Mammary epithelial cell (primary cell): ENCODE measurements at regions of chr5 and their contacts with region 1.

Region 1: DNA sequence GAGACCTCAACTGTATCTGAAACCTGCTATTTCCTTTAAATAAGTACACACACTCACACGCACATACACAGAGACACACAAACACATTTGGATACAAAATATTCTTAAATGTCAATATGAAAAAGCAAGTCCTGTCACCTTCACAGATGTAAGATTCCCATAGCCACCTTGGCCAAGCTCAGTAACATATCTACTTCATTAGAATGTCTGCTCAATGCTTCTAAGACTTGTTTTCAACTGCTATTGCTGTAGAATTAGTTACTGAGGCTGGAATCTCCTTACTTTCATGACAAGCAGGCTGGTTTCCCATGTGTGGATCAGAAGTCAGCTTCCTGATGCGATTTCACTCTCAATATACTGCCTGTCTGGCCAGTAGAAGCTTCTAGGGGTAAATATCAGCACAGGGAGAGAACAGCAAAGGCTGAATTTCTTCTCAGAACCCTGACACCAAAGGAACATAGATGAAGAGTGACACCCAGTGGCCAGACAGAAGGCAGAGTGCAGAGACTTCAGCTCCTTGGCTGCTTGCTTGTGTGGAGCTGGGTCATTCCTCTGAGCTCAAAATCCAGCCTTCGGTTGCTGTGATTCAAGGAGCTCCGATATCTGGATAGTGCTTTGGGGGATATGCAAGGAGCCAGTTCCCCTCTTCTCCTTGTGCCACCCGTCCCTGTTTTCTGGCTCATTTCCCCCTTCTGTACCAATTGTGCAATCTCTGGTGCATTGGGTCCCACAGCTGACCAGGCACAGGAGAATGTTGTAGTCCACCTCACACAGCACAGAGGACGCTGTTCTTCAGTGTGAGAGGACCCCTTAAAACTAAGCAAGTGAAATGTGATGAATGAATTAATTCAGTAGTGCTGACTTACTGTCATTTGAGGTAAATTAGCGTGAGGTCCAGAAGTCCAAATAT is 26.6 kb upstream of the ABLIM3 start:
- DNase-seq: peak; percentile 77
- H3K4me3 ChIP-seq: no peak overlapping the region
- H3K27ac ChIP-seq: peak overlapping the region; percentile 65
- H3K4me1 ChIP-seq: peaks cover 24% of the 10 kb centered on the region
- H3K27me3 ChIP-seq: no peaks in the 10 kb centered on the region
- CTCF ChIP-seq: peak; percentile 88 to 95

Region 2: DNA sequence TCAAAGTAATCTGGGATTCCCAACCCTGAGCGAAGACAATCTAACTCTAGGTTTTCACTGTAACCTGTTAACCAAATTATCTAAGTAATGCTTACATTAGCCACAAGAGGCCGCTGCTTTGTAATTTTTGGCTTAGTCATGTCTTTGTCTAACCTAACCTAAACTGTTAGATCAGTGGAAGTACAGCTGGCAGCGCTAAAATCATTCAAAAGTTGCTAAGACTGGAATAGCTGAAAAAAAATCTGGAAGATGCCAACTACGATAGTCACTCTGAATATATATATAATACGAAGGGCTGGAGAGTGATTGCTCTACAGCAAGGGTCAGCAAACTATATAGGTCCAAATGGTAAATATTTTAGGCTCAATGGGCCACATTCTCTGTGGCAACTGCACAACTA is 670.7 kb before region 1 on chr5:
- CTCF ChIA-PET with region 1: no interaction called
- dilution Hi-C with region 1: no loop called
- in situ Hi-C with region 1: no loop called
- intact Hi-C with region 1: loop called (anchors 10 kb)
- DNase-seq: peak; percentile 46
- H3K4me3 ChIP-seq: no peak overlapping the region
- H3K27ac ChIP-seq: no peak overlapping the region
- H3K4me1 ChIP-seq: no peaks in the 10 kb centered on the region
- H3K27me3 ChIP-seq: no peaks in the 10 kb centered on the region
- CTCF ChIP-seq: peak; percentile 67 to 68

Region 3: DNA sequence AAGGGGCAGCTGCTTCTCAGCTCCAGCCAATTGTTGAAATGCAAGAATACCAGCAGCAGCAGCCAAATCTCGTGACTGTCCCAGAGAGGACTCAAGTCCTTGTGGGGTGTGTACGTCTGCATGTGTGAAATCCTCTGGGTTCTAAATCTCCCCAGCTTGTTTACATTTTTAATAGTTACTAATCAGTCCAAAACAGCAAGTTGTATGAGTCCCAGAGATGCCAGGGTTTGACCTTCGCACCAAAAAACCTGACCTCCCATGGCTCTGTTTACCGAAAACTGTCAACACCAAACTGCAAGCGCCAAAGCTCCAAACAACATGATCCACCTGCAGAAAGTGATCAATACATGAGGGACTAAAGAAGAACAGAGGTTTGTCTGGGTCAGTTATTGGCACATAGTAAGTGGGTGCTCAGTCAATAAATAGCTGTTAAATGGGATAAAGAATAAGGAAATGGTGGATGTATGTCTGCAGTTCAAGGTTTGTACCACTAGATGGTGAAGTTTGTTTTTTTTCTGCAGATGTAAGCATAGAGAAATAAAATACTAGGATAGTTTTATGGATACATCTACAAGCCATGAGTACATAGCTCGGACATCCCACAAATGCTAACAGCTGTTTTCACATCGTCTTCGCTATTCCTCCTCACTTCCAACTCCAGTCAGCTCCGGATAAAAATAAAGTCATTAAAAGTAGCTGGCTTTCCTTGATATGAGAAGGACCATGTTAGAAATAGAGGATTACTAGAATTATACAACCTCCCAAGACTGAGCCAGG is 373.5 kb before region 1 on chr5:
- CTCF ChIA-PET with region 1: interaction called, 11 read pairs
- dilution Hi-C with region 1: loop called (anchors 5 kb)
- in situ Hi-C with region 1: loop called (anchors 5 to 10 kb)
- intact Hi-C with region 1: loop called (anchors 1 kb)
- DNase-seq: peak; percentile 58
- H3K4me3 ChIP-seq: no peak overlapping the region
- H3K27ac ChIP-seq: no peak overlapping the region
- H3K4me1 ChIP-seq: no peaks in the 10 kb centered on the region
- H3K27me3 ChIP-seq: no peaks in the 10 kb centered on the region
- CTCF ChIP-seq: peak; percentile 66 to 77

Region 4: DNA sequence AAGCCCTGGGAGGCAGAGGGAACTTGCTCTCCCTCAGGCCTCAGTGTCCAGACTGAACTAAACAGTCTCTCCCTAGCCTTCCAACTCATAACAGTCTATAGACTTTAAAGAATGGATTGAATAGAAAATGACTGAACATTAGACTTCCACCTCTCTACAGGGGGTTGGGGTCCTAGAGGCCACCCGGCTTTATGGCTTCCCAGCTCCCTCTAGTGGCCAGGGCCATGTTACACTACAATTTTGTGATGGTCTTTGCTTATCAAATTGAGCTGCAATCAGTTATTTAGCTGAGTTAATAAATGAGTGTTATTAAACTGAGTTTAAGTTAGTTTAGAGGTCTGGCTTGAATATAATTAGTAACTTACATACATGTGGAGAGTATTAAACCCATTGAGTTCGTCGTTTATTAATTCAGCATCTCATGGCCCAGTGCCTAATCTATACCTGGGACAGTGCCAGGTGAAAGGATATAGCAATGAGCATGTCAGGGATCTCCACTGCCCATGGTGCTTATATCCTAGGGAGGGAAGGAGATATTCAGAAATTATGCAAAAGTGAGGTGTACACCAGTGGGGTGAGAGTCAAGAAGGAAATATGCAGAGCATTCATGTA is 157.0 kb before region 1 on chr5:
- CTCF ChIA-PET with region 1: interaction called, 4 read pairs
- dilution Hi-C with region 1: no loop called
- in situ Hi-C with region 1: no loop called
- intact Hi-C with region 1: loop called (anchors 1 kb)
- DNase-seq: peak; percentile 33
- H3K4me3 ChIP-seq: no peak overlapping the region
- H3K27ac ChIP-seq: peak overlapping the region; percentile 73
- H3K4me1 ChIP-seq: peaks cover 18% of the 10 kb centered on the region
- H3K27me3 ChIP-seq: no peaks in the 10 kb centered on the region
- CTCF ChIP-seq: peak; percentile 90

Region 5: DNA sequence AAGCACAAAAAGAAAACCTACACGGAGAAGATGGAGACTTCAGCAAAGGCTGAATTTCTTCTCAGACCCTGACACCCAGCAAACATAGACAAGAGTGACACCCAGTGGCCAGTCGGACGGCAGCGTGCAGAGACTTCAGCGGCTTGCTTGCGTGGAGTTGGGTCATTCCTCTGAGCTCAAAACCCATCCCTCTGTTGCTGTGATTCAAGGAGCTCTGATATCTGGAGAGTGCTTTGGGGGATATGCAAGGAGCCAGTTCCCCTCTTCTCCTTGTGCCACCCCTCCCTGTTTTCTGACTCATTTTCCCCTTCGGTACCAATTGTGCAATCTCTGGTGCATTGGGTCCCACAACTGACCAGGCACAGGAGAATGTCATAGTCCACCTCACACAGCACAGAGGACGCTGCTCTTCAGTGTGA is 79.3 kb before region 1 on chr5:
- CTCF ChIA-PET with region 1: interaction called, 14 read pairs
- dilution Hi-C with region 1: no loop called
- in situ Hi-C with region 1: loop called in 1 of 2 experiments (anchors 5 kb)
- intact Hi-C with region 1: loop called (anchors 1 kb)
- DNase-seq: peak; percentile 61
- H3K4me3 ChIP-seq: no peak overlapping the region
- H3K27ac ChIP-seq: no peak overlapping the region
- H3K4me1 ChIP-seq: peaks cover 25% of the 10 kb centered on the region
- H3K27me3 ChIP-seq: no peaks in the 10 kb centered on the region
- CTCF ChIP-seq: peak; percentile 88 to 90

Region 6: DNA sequence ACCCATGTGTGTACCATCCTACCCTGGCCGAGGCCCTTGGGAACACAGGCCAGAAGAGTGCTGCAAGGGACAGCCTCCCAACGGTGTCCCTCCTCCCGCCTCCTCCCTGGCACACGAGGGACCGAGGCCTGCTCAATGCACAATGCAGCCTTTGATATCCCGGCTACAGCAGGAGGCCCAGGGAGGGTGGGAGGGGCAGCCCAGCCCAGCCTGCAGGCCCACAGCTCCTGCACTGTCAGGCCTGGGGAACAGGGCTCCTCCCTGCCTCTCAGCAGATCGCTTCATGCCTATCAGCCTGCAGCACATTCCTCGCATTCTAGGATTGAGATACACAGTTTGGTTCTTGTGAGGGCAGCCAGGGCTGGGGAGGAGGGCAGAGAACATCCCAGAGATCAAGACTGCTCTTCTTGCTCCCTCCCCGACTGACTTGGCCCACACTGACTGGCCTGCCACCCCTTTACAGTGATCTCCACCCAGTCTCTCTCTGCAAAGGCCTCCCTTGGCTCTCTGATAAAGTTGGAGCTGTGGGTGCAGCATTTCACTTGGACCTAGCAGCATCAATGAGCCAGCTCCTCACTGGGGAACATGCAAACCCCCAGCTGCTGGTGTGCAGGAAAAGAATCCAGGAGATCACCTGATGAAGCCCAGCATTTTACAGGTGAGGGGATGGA is 51.5 kb before region 1 on chr5 and contains the start of gene SH3TC2:
- CTCF ChIA-PET with region 1: interaction called, 9 read pairs
- dilution Hi-C with region 1: no loop called
- in situ Hi-C with region 1: no loop called
- intact Hi-C with region 1: loop called (anchors 1 kb)
- DNase-seq: peak; percentile 87
- H3K4me3 ChIP-seq: peak within 1 kb of the TSS in 2 of 3 experiments; percentile 19 to 41
- H3K27ac ChIP-seq: peak within 1 kb of the TSS; percentile 84
- H3K4me1 ChIP-seq: peaks cover 53% of the 10 kb centered on the region
- H3K27me3 ChIP-seq: no peaks in the 10 kb centered on the region
- CTCF ChIP-seq: no peak
- total RNA-seq, gene SH3TC2: 42.0 to 57.8 TPM